ENCODE measurements at regions of chr6 and their contacts with region 1.

Region 1: GRCh38 chr6:20319520-20320357 is 81.9 kb upstream of the E2F3 start:
- DNase-seq: peak; percentile 89
- H3K4me3 Mint-ChIP-seq: peak overlapping the region; percentile 81
- H3K27ac Mint-ChIP-seq: peak overlapping the region; percentile 99
- H3K4me1 Mint-ChIP-seq: peaks cover 20% of the 10 kb centered on the region
- H3K27me3 Mint-ChIP-seq: peaks cover 8% of the 10 kb centered on the region

Region 2: GRCh38 chr6:20202324-20202658 is 117.4 kb before region 1 on chr6:
- CTCF ChIA-PET with region 1: no interaction called
- DNase-seq: no peak
- H3K4me3 Mint-ChIP-seq: no peak overlapping the region
- H3K27ac Mint-ChIP-seq: no peak overlapping the region
- H3K4me1 Mint-ChIP-seq: peaks cover 60% of the 10 kb centered on the region
- H3K27me3 Mint-ChIP-seq: no peaks in the 10 kb centered on the region

Region 3: DNA sequence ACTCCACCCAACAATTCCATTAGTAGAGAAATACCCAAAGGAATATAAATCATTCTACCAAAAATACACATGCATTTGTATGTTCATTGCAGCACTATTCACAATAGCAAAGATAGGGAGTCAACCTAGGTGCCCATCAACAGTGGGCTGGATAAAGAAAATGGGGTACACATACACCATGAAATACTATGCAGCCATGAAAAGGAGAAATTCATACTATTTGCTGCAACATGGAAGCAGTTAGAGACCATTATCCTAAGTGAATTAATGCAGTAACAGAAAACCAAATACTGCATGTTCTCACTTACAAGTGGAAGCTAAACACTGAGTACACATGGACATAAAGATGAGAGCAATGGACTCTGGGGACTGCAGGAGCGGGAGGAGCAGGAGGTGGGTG is 35.1 kb before region 1 on chr6:
- CTCF ChIA-PET with region 1: no interaction called
- DNase-seq: no peak
- H3K4me3 Mint-ChIP-seq: no peak overlapping the region
- H3K27ac Mint-ChIP-seq: no peak overlapping the region
- H3K4me1 Mint-ChIP-seq: no peaks in the 10 kb centered on the region
- H3K27me3 Mint-ChIP-seq: peaks cover 42% of the 10 kb centered on the region

Region 4: GRCh38 chr6:20302702-20303251 is 17.0 kb before region 1 on chr6:
- CTCF ChIA-PET with region 1: no interaction called
- DNase-seq: no peak
- H3K4me3 Mint-ChIP-seq: no peak overlapping the region
- H3K27ac Mint-ChIP-seq: no peak overlapping the region
- H3K4me1 Mint-ChIP-seq: no peaks in the 10 kb centered on the region
- H3K27me3 Mint-ChIP-seq: peaks cover 4% of the 10 kb centered on the region

Region 5: GRCh38 chr6:20366091-20366832 is 46.5 kb after region 1 on chr6:
- CTCF ChIA-PET with region 1: interaction called, 10 read pairs
- DNase-seq: peak; percentile 74
- H3K4me3 Mint-ChIP-seq: peak overlapping the region; percentile 64
- H3K27ac Mint-ChIP-seq: peak overlapping the region; percentile 100
- H3K4me1 Mint-ChIP-seq: peaks cover 65% of the 10 kb centered on the region
- H3K27me3 Mint-ChIP-seq: peaks cover under 1% of the 10 kb centered on the region